HCT116 (cell line): ENCODE measurements at regions of chr17 and their contacts with region 1.

Region 1: DNA sequence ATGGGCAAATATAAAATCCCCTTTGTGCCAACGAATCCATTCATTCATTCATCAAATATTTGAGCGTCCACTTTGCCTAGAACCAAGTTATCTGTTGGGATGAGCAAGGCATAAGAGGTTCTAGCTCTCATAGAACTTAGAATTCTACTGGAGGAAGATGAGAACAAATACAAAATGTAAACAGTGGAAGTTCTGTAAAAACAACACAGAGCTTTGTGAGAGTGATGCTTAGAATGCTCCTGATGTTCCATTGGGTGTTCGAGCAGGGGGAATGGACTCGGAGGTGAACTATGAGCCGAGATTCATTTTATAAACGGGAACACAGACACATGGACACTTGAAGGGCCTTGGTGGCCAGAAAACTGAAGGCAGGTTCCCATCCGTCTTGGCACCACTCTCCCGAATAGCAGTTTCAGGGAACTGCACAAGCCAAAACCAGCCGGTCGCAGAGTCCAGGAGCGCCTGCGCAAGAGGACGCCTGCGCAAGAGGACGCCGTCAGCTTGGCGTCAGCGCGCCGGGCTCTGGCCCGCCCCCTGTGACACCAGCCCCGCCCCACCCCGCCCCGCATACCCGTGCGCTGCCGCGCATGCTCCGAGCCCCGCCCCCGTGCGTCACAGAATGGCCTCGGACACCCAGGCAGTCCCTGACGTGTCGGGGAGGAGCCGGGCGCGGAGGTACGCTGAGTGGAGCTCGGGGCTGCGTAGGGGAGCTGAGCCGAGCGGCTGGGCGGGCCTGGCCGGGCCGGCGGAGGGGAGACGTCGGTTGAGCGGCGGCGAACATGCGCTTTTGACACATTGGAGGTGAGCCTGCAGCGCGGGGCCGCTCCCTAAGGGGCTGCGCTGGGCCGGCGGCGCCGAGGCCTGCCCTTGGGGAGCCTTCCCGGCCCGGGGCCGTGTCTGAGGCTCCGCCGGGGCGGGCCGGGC is at the start of gene NDEL1:
- DNase-seq: peak; percentile 92
- ATAC-seq: peak; percentile 98
- H3K4me3 ChIP-seq: peak within 1 kb of the TSS; percentile 71 to 94
- H3K27ac ChIP-seq: peak within 1 kb of the TSS; percentile 94
- H3K4me1 ChIP-seq: peaks cover 6 to 20% of the 10 kb centered on the region in 2 experiments
- H3K27me3 ChIP-seq: no peaks in the 10 kb centered on the region
- CTCF ChIP-seq: no peak
- POLR2A ChIP-seq: peak; percentile 96
- RAD21 ChIP-seq: 0 out of 2 replicates have a peak, but pooled peaks have one; percentile 3
- total RNA-seq, gene NDEL1: 39.2 TPM

Region 2: GRCh38 chr17:8447799-8448198 is 12.3 kb after region 1 on chr17:
- CTCF ChIA-PET with region 1: no interaction called
- POLR2A ChIA-PET with region 1: interaction called, 11 read pairs
- RAD21 ChIA-PET with region 1: no interaction called
- intact Hi-C with region 1: no loop called
- DNase-seq: no peak
- ATAC-seq: no peak
- H3K4me3 ChIP-seq: no peak overlapping the region
- H3K27ac ChIP-seq: no peak overlapping the region
- H3K4me1 ChIP-seq: no peaks in the 10 kb centered on the region
- H3K27me3 ChIP-seq: no peaks in the 10 kb centered on the region
- CTCF ChIP-seq: no peak
- POLR2A ChIP-seq: no peak
- RAD21 ChIP-seq: no peak

Region 3: GRCh38 chr17:8630802-8631553 is 195.5 kb after region 1 on chr17:
- CTCF ChIA-PET with region 1: no interaction called
- POLR2A ChIA-PET with region 1: interaction called, 7 read pairs
- RAD21 ChIA-PET with region 1: no interaction called
- intact Hi-C with region 1: loop called (anchors 5 kb)
- DNase-seq: peak; percentile 99
- ATAC-seq: peak; percentile 95
- H3K4me3 ChIP-seq: peak overlapping the region; percentile 95 to 96
- H3K27ac ChIP-seq: peak overlapping the region; percentile 65
- H3K4me1 ChIP-seq: peaks cover 11 to 15% of the 10 kb centered on the region in 2 experiments
- H3K27me3 ChIP-seq: no peaks in the 10 kb centered on the region
- CTCF ChIP-seq: peak in 1 of 3 experiments; percentile 26; a peak in 1 of 6 replicates
- POLR2A ChIP-seq: peak; percentile 44
- RAD21 ChIP-seq: no peak